Naive thymus-derived CD8-positive, alpha-beta T cell (primary cell): ENCODE measurements at regions of chr11 and their contacts with region 1.

Region 1: GRCh38 chr11:14566331-14567063 is 46.3 kb upstream of the PSMA1 start:
- DNase-seq: no peak
- ATAC-seq: no peak
- H3K4me3 Mint-ChIP-seq: peak overlapping the region in 3 of 10 donors; percentile 1 to 37 (median 36)
- H3K27ac Mint-ChIP-seq: peak overlapping the region; percentile 44 to 86 (median 74)
- H3K4me1 Mint-ChIP-seq: peaks cover 30 to 70% (median 65%) of the 10 kb centered on the region in 4 donors
- H3K27me3 Mint-ChIP-seq: no peaks in the 10 kb centered on the region

Region 2: DNA sequence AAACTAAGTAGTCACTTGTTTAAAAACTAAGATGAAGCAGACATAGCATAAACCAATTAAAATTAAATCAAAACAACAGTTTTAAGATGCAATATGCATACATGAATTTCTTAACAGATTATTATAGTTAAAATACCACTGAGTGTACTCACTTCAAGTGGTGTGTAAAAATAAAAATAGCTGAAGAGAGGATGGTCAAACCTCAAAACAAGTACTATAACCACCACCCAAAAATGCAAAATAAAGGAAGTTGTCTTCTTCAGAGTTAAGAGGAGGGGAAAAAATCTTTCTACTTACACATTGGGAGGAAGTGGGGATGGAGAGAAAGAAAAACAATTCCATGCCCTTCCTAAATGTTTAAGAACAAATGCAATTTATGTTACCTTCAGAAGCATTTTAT is 239.4 kb before region 1 on chr11:
- POLR2A ChIA-PET with region 1: no interaction called
- DNase-seq: no peak
- ATAC-seq: no peak
- H3K4me3 Mint-ChIP-seq: peak overlapping the region in 5 of 10 donors; percentile 0 to 43 (median 36)
- H3K27ac Mint-ChIP-seq: peak overlapping the region in 2 of 10 donors; percentile 43 to 66
- H3K4me1 Mint-ChIP-seq: peaks cover 11 to 75% (median 26%) of the 10 kb centered on the region in 4 donors
- H3K27me3 Mint-ChIP-seq: no peaks in the 10 kb centered on the region

Region 3: DNA sequence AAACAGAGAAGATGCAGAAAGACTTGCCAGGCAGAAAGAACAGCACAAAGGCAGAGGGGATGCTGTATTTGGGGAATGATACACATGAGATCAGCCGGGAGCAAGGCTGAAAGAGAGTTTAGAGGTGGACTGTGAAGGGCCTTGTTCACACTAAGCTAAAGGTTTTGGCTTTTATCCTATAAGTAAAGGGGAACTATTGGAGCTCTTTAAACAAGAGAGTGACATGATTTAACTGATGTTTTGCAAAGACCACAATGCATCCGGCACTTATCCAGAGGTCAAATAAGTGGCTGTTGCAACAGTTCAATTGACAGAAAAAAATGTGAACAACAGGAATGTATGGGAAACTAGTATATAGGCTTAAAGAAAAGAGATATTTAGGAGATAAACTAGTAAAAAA is 142.9 kb before region 1 on chr11:
- POLR2A ChIA-PET with region 1: no interaction called
- DNase-seq: no peak
- ATAC-seq: no peak
- H3K4me3 Mint-ChIP-seq: no peak overlapping the region
- H3K27ac Mint-ChIP-seq: no peak overlapping the region
- H3K4me1 Mint-ChIP-seq: peaks cover 0 to 2% (median 0%) of the 10 kb centered on the region in 4 donors
- H3K27me3 Mint-ChIP-seq: no peaks in the 10 kb centered on the region

Region 4: DNA sequence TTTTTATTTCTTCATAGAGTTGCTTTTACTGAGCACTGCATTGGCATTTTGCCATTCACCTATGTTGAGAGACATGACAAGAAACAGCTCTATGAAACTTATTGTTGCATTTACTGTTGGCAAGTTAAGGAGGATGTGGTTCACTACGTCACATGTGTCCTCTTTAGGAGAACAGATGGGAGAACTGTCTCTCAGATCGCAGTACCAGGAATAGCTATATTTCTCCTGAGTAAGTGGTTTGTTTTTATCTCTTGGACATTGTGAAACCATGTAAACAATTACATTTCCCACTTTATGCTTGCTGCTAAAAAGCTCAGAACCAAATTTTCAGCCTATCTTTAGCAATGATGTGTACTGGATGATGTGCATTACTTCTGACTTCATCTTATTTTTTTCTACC is 11.5 kb before region 1 on chr11:
- POLR2A ChIA-PET with region 1: interaction called, 22 read pairs
- DNase-seq: peak in 8 of 10 donors; percentile 24 to 90 (median 74)
- ATAC-seq: peak; percentile 88 to 95
- H3K4me3 Mint-ChIP-seq: peak overlapping the region; percentile 10 to 77 (median 58)
- H3K27ac Mint-ChIP-seq: peak overlapping the region; percentile 88 to 98 (median 96)
- H3K4me1 Mint-ChIP-seq: peaks cover 35 to 49% (median 42%) of the 10 kb centered on the region in 4 donors
- H3K27me3 Mint-ChIP-seq: no peaks in the 10 kb centered on the region